Heart right ventricle (tissue), 16 donors: ENCODE measurements at regions of chr18 and their contacts with region 1.

Region 1: GRCh38 chr18:28504100-28504499 is 327.2 kb upstream of the CDH2 start:
- DNase-seq: no peak
- ATAC-seq: no peak
- H3K4me3 ChIP-seq: no peak overlapping the region
- H3K27ac ChIP-seq: no peak overlapping the region
- H3K4me1 ChIP-seq: no peaks in the 10 kb centered on the region
- H3K27me3 ChIP-seq: no peaks in the 10 kb centered on the region
- CTCF ChIP-seq: no peak

Region 2: DNA sequence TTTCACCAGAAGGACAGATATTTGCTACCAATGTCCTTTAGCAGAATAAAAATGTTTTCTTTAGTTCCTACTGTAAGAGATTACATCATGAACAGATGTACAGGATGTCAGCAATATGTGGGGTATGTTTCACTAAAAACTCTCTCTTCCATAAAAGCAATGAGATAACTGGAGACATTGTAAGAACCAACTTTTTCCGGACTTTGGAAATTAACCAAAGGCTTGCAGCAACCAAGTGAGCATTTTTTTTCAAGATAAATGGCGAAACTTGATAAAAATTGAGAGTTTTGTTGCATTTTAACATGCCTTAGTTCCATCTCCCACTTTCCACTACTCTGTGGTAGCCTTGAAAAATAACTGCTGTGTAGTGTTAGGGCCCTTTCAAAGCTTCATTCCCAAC is 102.6 kb after region 1 on chr18:
- intact Hi-C with region 1: no loop called
- DNase-seq: no peak
- ATAC-seq: no peak
- H3K4me3 ChIP-seq: no peak overlapping the region
- H3K27ac ChIP-seq: no peak overlapping the region
- H3K4me1 ChIP-seq: no peaks in the 10 kb centered on the region
- H3K27me3 ChIP-seq: no peaks in the 10 kb centered on the region
- CTCF ChIP-seq: no peak

Region 3: DNA sequence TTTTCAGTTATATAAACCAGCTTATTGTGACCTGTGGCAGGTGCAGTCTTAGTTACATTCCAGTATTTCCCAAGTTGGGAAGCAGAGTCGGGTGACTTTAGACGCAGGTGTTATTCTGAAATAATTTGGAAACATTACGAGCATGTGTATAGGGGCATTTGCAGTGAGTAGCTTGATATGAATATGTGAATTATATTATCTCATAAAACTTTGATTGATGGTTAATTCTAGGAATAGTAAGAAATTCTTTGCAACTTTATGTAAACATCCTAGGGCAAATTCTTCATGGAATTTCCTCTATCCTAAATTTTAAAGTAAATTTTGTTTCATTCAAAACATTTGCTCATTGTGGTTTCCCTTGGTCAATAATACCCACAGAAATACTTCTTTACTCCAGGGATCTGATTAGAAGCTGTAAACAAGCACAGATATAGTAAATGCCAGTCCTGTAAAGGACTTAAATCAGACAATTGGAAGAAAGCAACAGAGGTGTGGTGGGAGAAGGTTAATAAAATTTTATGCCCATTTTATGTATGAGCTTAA is 253.4 kb after region 1 on chr18:
- intact Hi-C with region 1: loop called in 1 of 10 experiments (anchors 5 kb)
- DNase-seq: no peak
- ATAC-seq: no peak
- H3K4me3 ChIP-seq: no peak overlapping the region
- H3K27ac ChIP-seq: no peak overlapping the region
- H3K4me1 ChIP-seq: no peaks in the 10 kb centered on the region
- H3K27me3 ChIP-seq: no peaks in the 10 kb centered on the region
- CTCF ChIP-seq: no peak